ENCODE measurements at regions of chr6 and their contacts with region 1.

Region 1: DNA sequence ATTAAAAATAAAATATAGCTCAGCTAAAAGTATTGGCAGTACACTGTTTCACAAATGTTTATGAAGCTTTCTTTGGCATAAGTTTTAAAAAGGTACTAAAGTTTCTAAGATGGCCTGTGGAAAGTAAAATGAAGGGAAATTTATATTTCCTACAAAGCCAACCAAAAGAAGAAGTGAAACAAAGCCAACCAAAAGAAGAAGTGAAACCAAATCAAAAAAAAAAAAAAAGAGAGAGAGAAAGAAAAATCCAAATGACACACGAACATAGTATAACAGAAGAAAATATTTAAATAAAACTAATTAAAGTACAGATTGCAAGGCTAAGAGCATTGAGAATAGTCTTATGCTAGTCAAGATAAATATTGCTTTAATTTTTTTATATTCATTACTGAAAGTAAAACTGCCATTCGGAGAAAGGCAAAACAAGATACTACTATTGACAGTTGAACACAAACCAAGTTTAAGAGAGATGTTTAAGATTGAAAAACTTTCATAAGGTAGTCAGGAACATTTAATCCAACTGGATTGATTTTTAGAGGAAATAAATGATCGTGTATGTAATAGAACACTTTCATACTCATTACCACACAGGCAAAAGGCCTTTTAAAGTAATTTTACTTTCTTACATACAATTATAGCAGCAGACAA is 12.8 kb upstream of the KHDRBS2 start:
- DNase-seq: peak; percentile 31
- ATAC-seq: peak; percentile 86
- H3K4me3 ChIP-seq: no peak overlapping the region
- H3K27ac ChIP-seq: no peak overlapping the region
- H3K4me1 ChIP-seq: peaks cover 4% of the 10 kb centered on the region; the same call in 1 of the 2 replicates
- H3K27me3 ChIP-seq: no peaks in the 10 kb centered on the region
- CTCF ChIP-seq: no peak
- EP300 ChIP-seq: peak; percentile 79 to 93
- POLR2A ChIP-seq: no peak
- RAD21 ChIP-seq: no peak

Region 2: GRCh38 chr6:62174548-62174947 is 124.3 kb before region 1 on chr6:
- CTCF ChIA-PET with region 1: no interaction called
- POLR2A ChIA-PET with region 1: no interaction called
- RAD21 ChIA-PET with region 1: no interaction called
- SMC1A ChIA-PET with region 1: no interaction called
- in situ Hi-C with region 1: no loop called
- intact Hi-C with region 1: no loop called
- DNase-seq: no peak
- ATAC-seq: no peak
- H3K4me3 ChIP-seq: no peak overlapping the region
- H3K27ac ChIP-seq: no peak overlapping the region
- H3K4me1 ChIP-seq: no peaks in the 10 kb centered on the region
- H3K27me3 ChIP-seq: no peaks in the 10 kb centered on the region
- CTCF ChIP-seq: no peak
- EP300 ChIP-seq: no peak
- POLR2A ChIP-seq: no peak
- RAD21 ChIP-seq: no peak

Region 3: DNA sequence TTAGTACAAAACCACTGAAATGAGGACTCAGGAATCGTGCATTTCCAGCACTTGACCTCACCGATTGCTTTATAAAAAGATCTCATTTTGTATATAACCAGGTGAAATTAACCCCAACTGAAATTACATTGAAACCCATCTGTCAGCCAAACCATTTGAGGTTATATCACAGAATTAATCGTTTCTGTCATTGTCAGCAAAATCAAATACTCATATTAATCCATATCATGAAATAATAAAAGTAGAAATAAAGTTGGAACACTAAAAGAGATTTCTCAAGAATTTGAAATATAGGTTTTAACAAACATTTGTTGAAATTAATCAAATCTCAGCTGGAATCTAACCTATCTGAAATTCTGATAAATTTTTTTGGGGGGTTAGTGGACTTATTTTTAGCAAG is 36.6 kb before region 1 on chr6:
- CTCF ChIA-PET with region 1: no interaction called
- POLR2A ChIA-PET with region 1: no interaction called
- RAD21 ChIA-PET with region 1: no interaction called
- SMC1A ChIA-PET with region 1: no interaction called
- in situ Hi-C with region 1: no loop called
- intact Hi-C with region 1: no loop called
- DNase-seq: no peak
- ATAC-seq: no peak
- H3K4me3 ChIP-seq: no peak overlapping the region
- H3K27ac ChIP-seq: no peak overlapping the region
- H3K4me1 ChIP-seq: no peaks in the 10 kb centered on the region
- H3K27me3 ChIP-seq: no peaks in the 10 kb centered on the region
- CTCF ChIP-seq: no peak
- EP300 ChIP-seq: no peak
- POLR2A ChIP-seq: no peak
- RAD21 ChIP-seq: no peak

Region 4: DNA sequence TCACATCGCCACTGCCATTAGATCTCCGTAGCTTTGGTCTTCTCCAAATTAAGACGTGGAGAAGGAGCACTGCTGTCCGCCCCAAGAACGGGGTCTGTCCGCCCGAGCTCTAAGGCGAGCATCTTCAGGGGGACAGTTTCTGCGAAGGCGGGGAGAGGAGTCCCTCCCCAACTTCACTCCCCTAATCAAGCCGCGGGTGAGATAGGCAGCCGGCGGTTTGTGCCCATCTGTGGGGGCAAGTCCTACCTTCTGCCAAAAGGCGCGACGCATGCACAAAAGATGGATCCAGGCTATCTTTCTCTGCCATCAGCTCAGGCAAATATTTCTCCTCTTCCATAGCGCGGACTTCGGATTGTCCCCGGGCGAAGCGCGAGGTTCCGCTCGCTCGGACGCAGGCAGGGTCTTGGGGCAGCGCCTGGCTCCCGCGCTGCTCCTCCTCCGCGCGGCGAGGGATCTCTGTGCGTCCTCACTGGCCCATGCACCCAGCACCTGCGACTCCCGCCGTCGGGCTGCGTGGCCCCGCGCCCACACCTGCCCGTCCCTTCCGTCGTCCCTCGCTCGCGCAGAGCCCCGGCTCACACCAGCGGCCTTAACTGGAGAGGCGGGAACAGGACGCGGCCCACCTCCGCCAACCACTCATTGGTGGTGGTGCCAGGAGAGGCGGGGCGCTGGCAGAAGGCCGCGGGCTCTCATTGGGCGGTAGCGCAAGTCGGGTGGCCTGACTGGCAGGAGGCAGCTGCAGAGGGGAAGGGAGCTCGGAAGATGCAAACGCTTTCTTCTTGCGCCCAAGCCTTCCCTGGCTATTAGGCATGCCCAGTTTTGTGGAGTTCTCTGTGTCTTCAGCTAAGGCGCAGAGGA is 13.0 kb before region 1 on chr6 and contains the start of gene KHDRBS2:
- CTCF ChIA-PET with region 1: interaction called, 16 read pairs
- POLR2A ChIA-PET with region 1: no interaction called
- RAD21 ChIA-PET with region 1: interaction called, 3 read pairs
- SMC1A ChIA-PET with region 1: interaction called, 6 read pairs
- in situ Hi-C with region 1: no loop called
- intact Hi-C with region 1: no loop called
- DNase-seq: peak; percentile 31
- ATAC-seq: peak; percentile 100
- H3K4me3 ChIP-seq: peak within 1 kb of the TSS; percentile 67
- H3K27ac ChIP-seq: no peak within 1 kb of the TSS
- H3K4me1 ChIP-seq: no peaks in the 10 kb centered on the region
- H3K27me3 ChIP-seq: peaks cover 0 to 3% of the 10 kb centered on the region in 2 experiments; a peak in 1 of 4 replicates
- CTCF ChIP-seq: no peak
- EP300 ChIP-seq: no peak
- POLR2A ChIP-seq: no peak
- RAD21 ChIP-seq: no peak
- polyA plus RNA-seq, gene KHDRBS2: not detected

Measured in GM12878 (cell line).